Dendritic cell treated with granulocyte-macrophage colony-stimulating factor and Interleukin-4, amounts not matched to agents 40 ng/mL and 50 ng/mL, for 4 days (primary cell): ENCODE measurements at regions of chr12 and their contacts with region 1.

Region 1: DNA sequence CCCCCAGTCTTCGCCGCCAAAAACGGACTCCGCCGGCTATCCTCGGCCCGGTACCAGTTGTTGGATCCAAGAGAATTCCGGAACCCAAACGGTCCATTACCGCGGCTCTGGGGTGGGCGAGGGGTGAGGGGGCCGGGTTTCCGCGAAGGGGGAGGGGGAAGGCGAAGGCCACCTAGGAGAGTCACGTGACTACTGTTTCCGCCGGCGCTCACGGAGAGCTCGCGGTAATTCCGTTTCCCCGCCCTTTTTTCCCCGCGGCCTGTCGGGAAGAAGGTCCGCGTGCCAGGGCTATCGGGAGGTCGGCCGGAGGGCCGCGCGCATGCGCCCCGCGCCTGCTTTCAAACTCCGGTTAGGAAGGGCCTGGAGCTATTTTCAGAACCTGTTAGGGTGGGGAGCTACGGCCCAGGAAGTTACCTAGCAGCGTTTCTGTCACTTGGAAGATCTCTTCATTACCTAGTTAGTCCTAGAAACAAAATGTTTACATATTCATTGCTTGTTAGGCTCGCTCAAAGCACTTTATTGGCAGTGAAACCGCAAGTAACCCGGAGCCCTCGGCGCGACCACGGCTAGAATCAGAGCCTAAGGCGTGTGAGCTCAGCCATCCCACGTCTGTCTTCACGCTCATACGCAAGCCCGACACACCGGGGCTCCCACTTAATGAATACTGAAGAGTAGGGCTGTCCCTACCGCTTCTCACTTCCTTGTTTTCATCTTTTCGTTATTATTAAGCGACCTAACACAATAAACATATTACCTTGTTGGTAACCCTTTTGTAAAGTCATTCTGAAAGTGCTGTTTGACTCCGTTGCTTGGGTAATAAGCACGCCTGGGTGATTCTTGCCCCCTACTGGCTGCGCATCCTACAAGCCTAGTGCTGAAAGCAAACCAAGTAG is 624 bp upstream of the SBNO1 start:
- H3K4me3 Mint-ChIP-seq: peak overlapping the region; percentile 87
- H3K27ac Mint-ChIP-seq: peak overlapping the region; percentile 96
- H3K4me1 Mint-ChIP-seq: peaks cover 25% of the 10 kb centered on the region
- H3K27me3 Mint-ChIP-seq: no peaks in the 10 kb centered on the region

Region 2: DNA sequence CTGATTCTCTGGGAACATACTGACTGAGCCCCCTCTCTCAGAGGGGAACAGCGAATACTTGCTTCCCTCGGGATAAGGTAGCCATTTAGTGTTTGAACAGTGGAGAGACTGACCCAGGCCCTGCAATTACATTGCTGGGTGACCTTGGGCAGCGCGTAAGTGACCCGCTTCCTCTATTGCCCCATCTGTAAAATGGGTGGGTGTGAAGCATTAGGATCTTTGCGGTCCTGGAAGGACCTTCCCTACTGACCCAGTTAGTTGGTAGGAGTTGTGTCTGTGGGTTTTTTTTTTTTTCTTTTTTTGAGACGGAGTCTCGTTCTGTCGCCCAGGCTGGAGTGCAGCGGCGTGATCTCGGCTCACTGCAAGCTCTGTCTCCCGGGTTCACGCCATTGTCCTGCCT is 17.4 kb after region 1 on chr12:
- intact Hi-C with region 1: loop called (anchors 1 kb)
- H3K4me3 Mint-ChIP-seq: no peak overlapping the region
- H3K27ac Mint-ChIP-seq: no peak overlapping the region
- H3K4me1 Mint-ChIP-seq: peaks cover 29% of the 10 kb centered on the region
- H3K27me3 Mint-ChIP-seq: no peaks in the 10 kb centered on the region

Region 3: DNA sequence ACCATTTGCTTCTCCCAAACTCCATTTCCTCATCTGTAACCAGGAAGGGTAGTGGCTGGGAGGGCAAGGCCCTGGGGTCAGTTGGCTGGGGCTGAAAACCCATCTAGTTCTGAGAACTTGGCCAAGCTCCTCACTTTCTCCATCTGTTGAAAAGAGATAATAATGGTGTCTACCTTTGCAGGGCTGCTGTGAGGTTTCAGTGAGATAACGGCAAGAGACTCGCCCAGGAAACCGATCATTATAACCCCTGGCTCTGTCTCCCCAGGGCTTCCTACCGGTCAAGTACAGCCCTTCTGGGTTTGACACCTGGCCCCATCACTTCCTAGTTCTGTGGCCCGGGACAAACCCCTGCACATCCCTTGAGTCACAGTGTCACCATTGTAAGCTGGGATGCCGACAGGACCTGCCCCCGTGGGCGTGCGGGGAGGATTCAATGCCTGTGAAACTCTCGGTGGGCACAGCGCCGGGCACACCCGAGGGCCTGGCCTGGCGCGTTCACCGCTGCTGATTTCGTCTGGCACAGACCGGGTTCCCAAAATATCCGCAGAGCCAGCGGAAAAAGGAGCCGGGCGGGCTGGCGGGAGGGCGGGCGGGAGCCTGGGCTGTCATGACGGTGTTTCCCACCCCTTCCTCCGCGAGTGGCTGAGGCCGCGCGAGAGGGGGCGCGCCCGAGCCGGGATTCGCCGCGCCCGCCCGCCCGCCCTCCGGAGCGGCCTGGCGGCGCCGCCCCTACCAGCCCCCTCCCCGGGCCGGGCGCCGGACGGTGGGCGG is 23.1 kb after region 1 on chr12:
- intact Hi-C with region 1: loop called (anchors 1 kb)
- H3K4me3 Mint-ChIP-seq: peak overlapping the region; percentile 79
- H3K27ac Mint-ChIP-seq: peak overlapping the region; percentile 94
- H3K4me1 Mint-ChIP-seq: peaks cover 56% of the 10 kb centered on the region
- H3K27me3 Mint-ChIP-seq: no peaks in the 10 kb centered on the region

Region 4: DNA sequence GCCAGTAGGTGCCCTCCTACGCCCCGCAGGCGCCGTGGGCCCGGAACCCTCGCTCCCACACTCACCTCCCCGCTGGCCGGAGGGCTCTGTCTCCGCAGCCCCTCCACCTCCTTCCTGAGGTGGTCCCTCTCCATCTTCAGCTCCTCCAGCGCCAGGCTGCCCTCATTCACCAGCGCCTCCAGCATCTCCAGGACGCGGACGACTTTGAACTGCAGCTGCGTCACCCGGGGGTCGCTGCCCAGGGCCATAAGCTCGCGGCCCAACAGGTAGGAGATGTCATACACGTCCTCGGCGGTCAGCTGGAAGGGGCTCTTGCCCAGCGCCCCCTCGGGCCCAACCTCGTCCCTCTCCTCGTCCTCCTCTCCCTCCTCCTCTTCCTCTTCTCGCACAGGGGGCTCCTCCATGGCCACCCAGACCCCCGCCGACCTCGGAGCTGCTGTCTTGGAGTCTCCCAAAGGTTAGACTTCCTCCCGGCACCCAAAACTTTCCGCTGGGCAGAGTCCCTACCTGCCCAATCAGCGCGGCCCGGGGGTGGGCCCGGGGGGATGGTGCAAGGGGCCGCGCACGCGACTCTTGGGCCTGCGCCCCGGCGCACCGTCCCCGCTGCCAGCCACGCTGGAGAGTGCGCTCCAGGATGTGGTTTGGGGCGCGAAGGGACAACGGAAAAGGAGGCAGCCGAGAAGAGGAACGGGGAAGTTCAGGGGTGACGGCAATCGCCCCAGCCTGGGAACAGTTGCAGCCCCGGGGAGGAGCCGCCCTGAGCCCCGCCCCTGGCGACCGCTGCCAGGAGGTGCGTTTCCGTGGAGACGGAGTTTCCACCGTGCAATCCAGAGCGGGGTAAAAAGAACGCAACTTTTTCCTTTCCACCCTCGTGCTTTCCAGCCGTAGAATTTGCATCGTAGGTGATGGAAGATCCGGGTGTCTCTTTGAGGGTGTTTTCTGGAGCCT is 71.0 kb after region 1 on chr12 and contains the start of gene RILPL2:
- intact Hi-C with region 1: loop called (anchors 10 kb)
- H3K4me3 Mint-ChIP-seq: peak within 1 kb of the TSS; percentile 89
- H3K27ac Mint-ChIP-seq: peak within 1 kb of the TSS; percentile 92
- H3K4me1 Mint-ChIP-seq: peaks cover 52% of the 10 kb centered on the region
- H3K27me3 Mint-ChIP-seq: no peaks in the 10 kb centered on the region